A549 (cell line): ENCODE measurements at regions of chr1 and their contacts with region 1.

Region 1: DNA sequence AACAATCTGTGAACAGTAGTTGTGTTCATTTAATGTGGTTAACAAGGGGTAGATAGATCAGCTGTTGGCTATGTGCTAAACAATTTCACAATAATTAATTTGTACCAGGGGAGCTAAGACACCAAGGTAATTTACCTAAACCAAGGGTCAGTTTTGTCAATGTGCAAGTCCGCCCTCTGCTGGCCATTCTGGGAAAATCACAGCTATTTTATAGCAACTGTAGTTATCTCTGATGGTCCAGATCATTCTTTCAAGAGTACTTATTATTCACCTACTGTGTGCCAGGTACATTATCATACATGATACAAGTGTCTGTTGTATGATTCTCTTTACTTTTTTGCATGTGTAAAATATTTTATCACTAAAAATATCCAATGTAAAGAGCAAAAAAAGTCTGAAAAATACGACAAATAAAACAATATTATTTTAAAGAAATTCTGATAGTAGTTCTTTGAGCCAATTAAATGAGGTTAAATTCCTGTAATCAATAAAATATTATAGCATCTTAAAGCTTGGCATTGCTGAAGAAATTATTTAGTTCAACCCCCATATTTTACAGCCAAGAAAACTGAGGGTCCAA is 312.3 kb upstream of the FAM78B start:
- DNase-seq: peak in 1 of 2 experiments; percentile 42
- ATAC-seq: peak in 1 of 2 experiments; percentile 60; a peak in 2 of 6 replicates
- H3K4me3 ChIP-seq: no peak overlapping the region
- H3K27ac ChIP-seq: no peak overlapping the region
- H3K4me1 ChIP-seq: no peaks in the 10 kb centered on the region
- CTCF ChIP-seq: peak; percentile 80
- EP300 ChIP-seq: no peak
- POLR2A ChIP-seq: no peak
- RAD21 ChIP-seq: peak; percentile 61 to 65

Region 2: GRCh38 chr1:165928075-165928731 is 550.9 kb before region 1 on chr1:
- CTCF ChIA-PET with region 1: interaction called, 18 read pairs
- POLR2A ChIA-PET with region 1: no interaction called
- DNase-seq: peak; percentile 60 to 63
- ATAC-seq: peak; percentile 45 to 71; a peak in 4 of 6 replicates
- H3K4me3 ChIP-seq: no peak overlapping the region
- H3K27ac ChIP-seq: no peak overlapping the region
- H3K4me1 ChIP-seq: no peaks in the 10 kb centered on the region
- CTCF ChIP-seq: peak; percentile 63
- EP300 ChIP-seq: no peak
- POLR2A ChIP-seq: no peak
- RAD21 ChIP-seq: peak; percentile 51 to 66

Region 3: GRCh38 chr1:166489670-166490436 is 10.7 kb after region 1 on chr1:
- CTCF ChIA-PET with region 1: interaction called, 30 read pairs
- POLR2A ChIA-PET with region 1: no interaction called
- DNase-seq: peak in 1 of 2 experiments; percentile 49
- ATAC-seq: peak; percentile 81
- H3K4me3 ChIP-seq: peak overlapping the region; percentile 36
- H3K27ac ChIP-seq: peak overlapping the region; percentile 45 to 68; a peak in 5 of 6 replicates
- H3K4me1 ChIP-seq: no peaks in the 10 kb centered on the region
- CTCF ChIP-seq: no peak
- EP300 ChIP-seq: no peak
- POLR2A ChIP-seq: no peak
- RAD21 ChIP-seq: no peak